GM12878 (cell line): ENCODE measurements at regions of chr2 and their contacts with region 1.

Region 1: DNA sequence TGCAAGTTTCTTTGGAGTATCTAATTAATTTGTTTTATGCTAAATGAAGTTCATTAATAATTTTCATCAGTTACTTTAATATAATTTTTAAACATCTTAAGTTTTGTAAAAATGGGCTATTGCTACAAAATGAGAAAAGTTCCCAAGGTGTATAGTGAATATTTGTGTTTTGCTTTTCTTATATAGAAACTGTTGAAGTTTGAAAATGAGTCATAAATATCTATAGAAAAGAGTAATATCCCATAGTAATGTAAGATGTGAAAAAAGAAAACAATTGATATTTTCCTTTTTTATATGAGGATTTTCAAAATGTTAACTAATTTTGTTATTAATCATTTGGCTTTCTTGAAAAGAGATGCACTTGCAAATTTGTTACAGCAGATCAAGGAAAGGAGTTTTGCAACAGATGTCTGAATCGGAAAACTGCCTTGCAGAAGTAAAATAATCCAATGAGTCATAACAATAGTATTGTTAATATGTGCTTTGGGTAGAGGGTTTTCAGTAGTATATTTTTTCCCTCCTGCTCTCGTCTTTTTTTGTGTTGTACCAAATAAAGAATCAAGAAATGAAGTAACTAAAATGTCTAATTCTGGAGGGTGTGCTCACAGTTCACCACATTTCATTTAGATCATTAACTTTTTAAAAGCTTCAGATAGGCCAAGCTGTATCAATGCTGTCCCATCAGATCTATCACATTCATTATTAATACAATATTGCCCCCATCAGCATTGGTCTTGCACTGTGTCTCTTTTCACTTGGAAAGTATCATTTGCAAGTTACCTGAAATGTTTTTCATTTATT is 15.5 kb downstream of the DUSP19 start:
- DNase-seq: peak; percentile 26
- ATAC-seq: peak; percentile 75
- H3K4me3 ChIP-seq: no peak overlapping the region
- H3K27ac ChIP-seq: no peak overlapping the region
- H3K4me1 ChIP-seq: peaks cover 19% of the 10 kb centered on the region; the same call in 1 of the 2 replicates
- H3K27me3 ChIP-seq: no peaks in the 10 kb centered on the region
- CTCF ChIP-seq: peak in 2 of 3 experiments; percentile 24 to 34; a peak in 3 of 6 replicates
- EP300 ChIP-seq: no peak; a peak in 1 of 4 replicates
- POLR2A ChIP-seq: no peak
- RAD21 ChIP-seq: peak; percentile 43

Region 2: GRCh38 chr2:182666674-182667314 is 427.3 kb before region 1 on chr2:
- CTCF ChIA-PET with region 1: interaction called, 6 read pairs
- POLR2A ChIA-PET with region 1: no interaction called
- RAD21 ChIA-PET with region 1: no interaction called
- SMC1A ChIA-PET with region 1: no interaction called
- in situ Hi-C with region 1: no loop called
- intact Hi-C with region 1: loop called (anchors 5 kb)
- DNase-seq: no peak
- ATAC-seq: peak; percentile 89
- H3K4me3 ChIP-seq: no peak overlapping the region
- H3K27ac ChIP-seq: no peak overlapping the region
- H3K4me1 ChIP-seq: no peaks in the 10 kb centered on the region
- H3K27me3 ChIP-seq: peaks cover 0 to 1% of the 10 kb centered on the region in 2 experiments; a peak in 2 of 4 replicates
- CTCF ChIP-seq: peak; percentile 43 to 64 (median 55); a peak in 5 of 6 replicates
- EP300 ChIP-seq: no peak
- POLR2A ChIP-seq: no peak
- RAD21 ChIP-seq: peak; percentile 67

Region 3: GRCh38 chr2:182763311-182763912 is 330.6 kb before region 1 on chr2:
- CTCF ChIA-PET with region 1: no interaction called
- POLR2A ChIA-PET with region 1: no interaction called
- RAD21 ChIA-PET with region 1: no interaction called
- SMC1A ChIA-PET with region 1: no interaction called
- in situ Hi-C with region 1: no loop called
- intact Hi-C with region 1: loop called (anchors 10 kb)
- DNase-seq: no peak
- ATAC-seq: peak; percentile 69
- H3K4me3 ChIP-seq: no peak overlapping the region
- H3K27ac ChIP-seq: no peak overlapping the region
- H3K4me1 ChIP-seq: no peaks in the 10 kb centered on the region
- H3K27me3 ChIP-seq: no peaks in the 10 kb centered on the region
- CTCF ChIP-seq: peak; percentile 33 to 54 (median 42); a peak in 5 of 6 replicates
- EP300 ChIP-seq: no peak
- POLR2A ChIP-seq: no peak
- RAD21 ChIP-seq: peak; percentile 35

Region 4: GRCh38 chr2:183614799-183615435 is 520.9 kb after region 1 on chr2:
- CTCF ChIA-PET with region 1: no interaction called
- POLR2A ChIA-PET with region 1: no interaction called
- RAD21 ChIA-PET with region 1: no interaction called
- SMC1A ChIA-PET with region 1: no interaction called
- in situ Hi-C with region 1: no loop called
- intact Hi-C with region 1: no loop called
- DNase-seq: no peak
- ATAC-seq: no peak
- H3K4me3 ChIP-seq: no peak overlapping the region
- H3K27ac ChIP-seq: no peak overlapping the region
- H3K4me1 ChIP-seq: no peaks in the 10 kb centered on the region
- H3K27me3 ChIP-seq: no peaks in the 10 kb centered on the region
- CTCF ChIP-seq: no peak
- EP300 ChIP-seq: no peak
- POLR2A ChIP-seq: no peak
- RAD21 ChIP-seq: no peak